ENCODE measurements at regions of chr12 and their contacts with region 1.

Region 1: GRCh38 chr12:28974166-28974565 is 174.9 kb upstream of the FAR2 start:
- DNase-seq: peak; percentile 5
- H3K4me3 ChIP-seq: no peak overlapping the region
- CTCF ChIP-seq: no peak

Region 2: DNA sequence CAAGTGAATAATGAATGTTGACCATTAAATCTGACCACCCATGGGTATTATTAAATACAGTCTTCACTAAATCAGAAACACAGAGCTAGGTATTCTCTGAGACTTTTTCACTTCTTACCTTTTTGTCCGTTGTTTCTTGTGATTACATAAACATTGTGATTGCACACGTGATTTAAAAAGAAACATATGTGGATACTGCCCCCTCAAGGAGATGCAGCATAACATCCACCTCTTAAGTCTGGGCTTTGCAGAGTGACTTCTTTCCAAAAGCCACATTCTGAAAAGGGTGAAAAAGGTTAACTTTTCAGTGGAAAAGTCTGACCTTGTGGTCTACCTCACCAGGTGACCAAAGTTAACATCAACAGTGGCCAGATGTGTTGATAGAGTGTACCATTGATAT is 10.6 kb before region 1 on chr12:
- CTCF ChIA-PET with region 1: interaction called, 21 read pairs
- POLR2A ChIA-PET with region 1: interaction called, 3 read pairs
- DNase-seq: no peak
- H3K4me3 ChIP-seq: no peak overlapping the region
- CTCF ChIP-seq: peak; percentile 10

Region 3: DNA sequence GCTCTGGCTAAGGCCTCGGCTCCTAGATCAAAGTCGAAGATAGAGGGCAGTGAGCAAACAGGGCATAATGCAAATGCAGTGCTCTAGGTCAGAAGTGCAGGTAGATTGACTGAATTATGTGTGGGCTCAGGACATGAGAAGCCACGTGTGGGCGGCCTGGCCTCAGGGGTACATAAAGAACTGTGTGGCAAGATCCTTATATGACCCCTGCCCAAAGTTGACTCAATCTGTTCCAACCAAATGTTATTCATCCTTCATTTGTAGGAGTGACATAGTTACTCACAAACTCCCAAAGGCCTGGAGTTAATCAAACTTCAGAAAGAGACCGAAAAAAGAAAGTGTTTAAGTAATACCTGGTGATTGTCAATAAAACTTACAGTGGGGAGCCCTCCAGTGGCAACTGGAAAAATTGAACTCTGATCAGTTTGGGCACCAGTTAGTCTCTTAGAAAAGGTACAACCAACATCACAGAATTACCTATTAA is 24.5 kb after region 1 on chr12:
- CTCF ChIA-PET with region 1: no interaction called
- POLR2A ChIA-PET with region 1: no interaction called
- DNase-seq: peak; percentile 3
- H3K4me3 ChIP-seq: no peak overlapping the region
- CTCF ChIP-seq: peak; percentile 40

Measured in AG04449 (cell line).